Right lobe of liver (tissue), 6 donors: ENCODE measurements at regions of chr12 and their contacts with region 1.

Region 1: GRCh38 chr12:121443193-121443870 is 43.4 kb downstream of the RNF34 start:
- DNase-seq: peak; percentile 83 to 88 (median 87)
- ATAC-seq: peak; percentile 91 to 95 (median 94)
- H3K4me3 ChIP-seq: no peak overlapping the region
- H3K27ac ChIP-seq: no peak overlapping the region
- H3K4me1 ChIP-seq: peaks cover 0 to 9% (median 3%) of the 10 kb centered on the region in 4 donors
- H3K27me3 ChIP-seq: no peaks in the 10 kb centered on the region
- CTCF ChIP-seq: peak; percentile 82 to 87 (median 85)
- POLR2A ChIP-seq: no peak

Region 2: GRCh38 chr12:121326996-121327674 is 116.2 kb before region 1 on chr12:
- intact Hi-C with region 1: loop called in 1 of 2 experiments (anchors 10 kb)
- DNase-seq: no peak
- ATAC-seq: no peak
- H3K4me3 ChIP-seq: no peak overlapping the region
- H3K27ac ChIP-seq: no peak overlapping the region
- H3K4me1 ChIP-seq: peaks cover 0 to 18% (median 0%) of the 10 kb centered on the region in 4 donors
- H3K27me3 ChIP-seq: no peaks in the 10 kb centered on the region
- CTCF ChIP-seq: no peak
- POLR2A ChIP-seq: no peak

Region 3: GRCh38 chr12:121351820-121352681 is 91.3 kb before region 1 on chr12 and contains the start of gene ANAPC5:
- intact Hi-C with region 1: loop called in 1 of 2 experiments (anchors 10 kb)
- DNase-seq: peak; percentile 91 to 96 (median 96)
- ATAC-seq: peak; percentile 99
- H3K4me3 ChIP-seq: peak within 1 kb of the TSS; percentile 90 to 99 (median 95)
- H3K27ac ChIP-seq: peak within 1 kb of the TSS; percentile 52 to 72 (median 57)
- H3K4me1 ChIP-seq: peaks cover 0 to 11% (median 3%) of the 10 kb centered on the region in 4 donors
- H3K27me3 ChIP-seq: no peaks in the 10 kb centered on the region
- CTCF ChIP-seq: peak in 1 of 4 donors; percentile 9
- POLR2A ChIP-seq: peak; percentile 92
- total RNA-seq, gene ANAPC5: 40.7 to 68.8 (median 49.8) TPM